CD4-positive, alpha-beta T cell (primary cell): ENCODE measurements at regions of chrX and their contacts with region 1.

Region 1: DNA sequence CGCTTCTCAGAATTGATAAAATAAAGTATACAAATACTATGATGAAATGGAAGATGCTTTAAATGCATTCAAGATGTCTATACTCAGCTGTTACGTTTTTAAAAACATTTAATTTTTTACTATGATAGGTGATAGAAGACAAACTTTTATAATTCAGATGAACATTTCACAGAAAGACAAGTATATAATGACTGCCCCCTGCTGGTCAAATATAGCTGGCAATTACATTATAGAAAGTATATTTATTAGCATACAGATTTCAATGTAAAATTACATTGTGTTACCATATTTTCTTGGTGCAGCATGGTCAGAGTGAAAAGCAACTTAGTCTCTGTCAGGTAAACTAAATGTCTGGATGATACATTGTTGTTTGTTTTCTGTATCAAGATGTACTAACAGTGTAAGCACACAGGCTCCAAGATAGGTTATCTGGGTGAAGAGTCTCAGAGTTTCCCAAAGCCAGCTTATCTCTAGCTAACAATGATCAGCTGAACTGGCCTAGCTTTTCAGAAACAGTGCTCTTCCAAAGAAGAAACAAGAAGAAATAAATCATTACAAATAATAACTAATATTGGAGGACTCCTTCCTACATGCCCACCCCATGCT is 54.1 kb downstream of the SRPX start:
- DNase-seq: peak in 5 of 14 experiments; percentile 1 to 39 (median 26)
- ATAC-seq: no peak
- H3K4me3 ChIP-seq: no peak overlapping the region
- H3K4me3 Mint-ChIP-seq: no peak overlapping the region
- H3K27ac ChIP-seq: no peak overlapping the region
- H3K27ac Mint-ChIP-seq: no peak overlapping the region
- H3K4me1 ChIP-seq: no peaks in the 10 kb centered on the region
- H3K4me1 Mint-ChIP-seq: no peaks in the 10 kb centered on the region
- H3K27me3 ChIP-seq: no peaks in the 10 kb centered on the region
- H3K27me3 Mint-ChIP-seq: no peaks in the 10 kb centered on the region
- CTCF ChIP-seq: peak; percentile 64

Region 2: DNA sequence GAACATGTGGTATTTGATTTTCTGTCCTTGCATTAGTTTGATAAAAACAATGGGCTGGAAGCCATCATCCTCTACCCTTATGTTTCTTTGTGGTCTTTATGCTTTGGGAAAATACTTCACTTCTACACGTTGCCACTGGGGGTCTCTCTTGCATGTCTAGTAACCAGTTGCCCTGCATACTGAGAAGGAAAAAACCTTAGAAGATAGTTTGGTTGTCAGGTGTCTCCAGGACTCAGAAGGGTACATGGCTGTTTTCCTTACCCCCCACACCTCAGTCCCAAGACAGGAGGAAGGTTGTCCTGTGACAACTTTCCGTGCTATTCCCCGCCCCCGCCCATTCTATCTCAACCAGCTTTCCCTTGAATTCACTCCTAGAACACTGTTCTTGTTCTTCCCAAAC is 657.2 kb before region 1 on chrX:
- CTCF ChIA-PET with region 1: no interaction called
- POLR2A ChIA-PET with region 1: no interaction called
- intact Hi-C with region 1: loop called in 1 of 2 experiments (anchors 5 kb)
- DNase-seq: peak in 1 of 14 experiments; percentile 0
- ATAC-seq: no peak
- H3K4me3 ChIP-seq: no peak overlapping the region
- H3K4me3 Mint-ChIP-seq: no peak overlapping the region
- H3K27ac ChIP-seq: no peak overlapping the region
- H3K27ac Mint-ChIP-seq: no peak overlapping the region
- H3K4me1 ChIP-seq: no peaks in the 10 kb centered on the region
- H3K4me1 Mint-ChIP-seq: no peaks in the 10 kb centered on the region
- H3K27me3 ChIP-seq: no peaks in the 10 kb centered on the region
- H3K27me3 Mint-ChIP-seq: no peaks in the 10 kb centered on the region
- CTCF ChIP-seq: no peak

Region 3: DNA sequence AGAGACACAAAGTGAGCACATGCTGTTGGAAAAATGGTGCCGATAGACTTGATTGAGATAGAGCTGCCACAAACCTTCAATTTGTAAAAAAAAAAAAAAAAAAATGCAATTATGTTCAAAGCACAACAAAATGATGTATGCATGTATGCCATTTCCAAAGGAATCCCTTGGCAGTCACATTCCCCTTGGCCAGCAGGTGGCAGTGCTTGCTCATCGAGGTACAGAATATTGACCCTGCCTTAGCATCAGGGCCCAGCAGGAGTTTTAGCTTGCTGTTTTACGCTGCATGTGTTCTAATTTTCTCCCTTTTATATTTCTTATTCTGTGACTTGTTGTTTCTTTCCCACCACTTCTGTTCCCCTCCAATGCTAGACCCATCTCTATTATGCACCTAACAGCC is 421.2 kb before region 1 on chrX:
- CTCF ChIA-PET with region 1: no interaction called
- POLR2A ChIA-PET with region 1: no interaction called
- intact Hi-C with region 1: loop called (anchors 2 kb)
- DNase-seq: peak; percentile 57 to 85 (median 72)
- ATAC-seq: peak; percentile 84
- H3K4me3 ChIP-seq: no peak overlapping the region
- H3K4me3 Mint-ChIP-seq: peak overlapping the region; percentile 4
- H3K27ac ChIP-seq: no peak overlapping the region
- H3K27ac Mint-ChIP-seq: no peak overlapping the region
- H3K4me1 ChIP-seq: peaks cover 15% of the 10 kb centered on the region
- H3K4me1 Mint-ChIP-seq: peaks cover 14% of the 10 kb centered on the region
- H3K27me3 ChIP-seq: no peaks in the 10 kb centered on the region
- H3K27me3 Mint-ChIP-seq: no peaks in the 10 kb centered on the region
- CTCF ChIP-seq: peak; percentile 66

Region 4: GRCh38 chrX:37926700-37927099 is 239.9 kb before region 1 on chrX:
- CTCF ChIA-PET with region 1: no interaction called
- POLR2A ChIA-PET with region 1: no interaction called
- intact Hi-C with region 1: loop called (anchors 2 to 5 kb)
- DNase-seq: peak in 3 of 14 experiments; percentile 33 to 37 (median 34)
- ATAC-seq: no peak
- H3K4me3 ChIP-seq: no peak overlapping the region
- H3K4me3 Mint-ChIP-seq: no peak overlapping the region
- H3K27ac ChIP-seq: no peak overlapping the region
- H3K27ac Mint-ChIP-seq: no peak overlapping the region
- H3K4me1 ChIP-seq: no peaks in the 10 kb centered on the region
- H3K4me1 Mint-ChIP-seq: no peaks in the 10 kb centered on the region
- H3K27me3 ChIP-seq: no peaks in the 10 kb centered on the region
- H3K27me3 Mint-ChIP-seq: peaks cover 5% of the 10 kb centered on the region
- CTCF ChIP-seq: peak; percentile 29

Region 5: GRCh38 chrX:38138900-38139299 is 27.7 kb before region 1 on chrX:
- CTCF ChIA-PET with region 1: no interaction called
- POLR2A ChIA-PET with region 1: no interaction called
- intact Hi-C with region 1: no loop called
- DNase-seq: no peak
- ATAC-seq: no peak
- H3K4me3 ChIP-seq: no peak overlapping the region
- H3K4me3 Mint-ChIP-seq: no peak overlapping the region
- H3K27ac ChIP-seq: no peak overlapping the region
- H3K27ac Mint-ChIP-seq: no peak overlapping the region
- H3K4me1 ChIP-seq: no peaks in the 10 kb centered on the region
- H3K4me1 Mint-ChIP-seq: no peaks in the 10 kb centered on the region
- H3K27me3 ChIP-seq: no peaks in the 10 kb centered on the region
- H3K27me3 Mint-ChIP-seq: peaks cover 6% of the 10 kb centered on the region
- CTCF ChIP-seq: no peak